Dendritic cell treated with granulocyte-macrophage colony-stimulating factor and Interleukin-4, amounts not matched to agents 40 ng/mL and 50 ng/mL, for 4 days (primary cell): ENCODE measurements at regions of chr5 and their contacts with region 1.

Region 1: GRCh38 chr5:132007399-132008165 is 3.9 kb downstream of the ACSL6 start:
- H3K4me3 Mint-ChIP-seq: no peak overlapping the region
- H3K27ac Mint-ChIP-seq: no peak overlapping the region
- H3K4me1 Mint-ChIP-seq: peaks cover 11% of the 10 kb centered on the region
- H3K27me3 Mint-ChIP-seq: peaks cover 45% of the 10 kb centered on the region

Region 2: GRCh38 chr5:131423056-131423455 is 584.5 kb before region 1 on chr5:
- intact Hi-C with region 1: loop called (anchors 2 kb)
- H3K4me3 Mint-ChIP-seq: no peak overlapping the region
- H3K27ac Mint-ChIP-seq: no peak overlapping the region
- H3K4me1 Mint-ChIP-seq: no peaks in the 10 kb centered on the region
- H3K27me3 Mint-ChIP-seq: no peaks in the 10 kb centered on the region

Region 3: DNA sequence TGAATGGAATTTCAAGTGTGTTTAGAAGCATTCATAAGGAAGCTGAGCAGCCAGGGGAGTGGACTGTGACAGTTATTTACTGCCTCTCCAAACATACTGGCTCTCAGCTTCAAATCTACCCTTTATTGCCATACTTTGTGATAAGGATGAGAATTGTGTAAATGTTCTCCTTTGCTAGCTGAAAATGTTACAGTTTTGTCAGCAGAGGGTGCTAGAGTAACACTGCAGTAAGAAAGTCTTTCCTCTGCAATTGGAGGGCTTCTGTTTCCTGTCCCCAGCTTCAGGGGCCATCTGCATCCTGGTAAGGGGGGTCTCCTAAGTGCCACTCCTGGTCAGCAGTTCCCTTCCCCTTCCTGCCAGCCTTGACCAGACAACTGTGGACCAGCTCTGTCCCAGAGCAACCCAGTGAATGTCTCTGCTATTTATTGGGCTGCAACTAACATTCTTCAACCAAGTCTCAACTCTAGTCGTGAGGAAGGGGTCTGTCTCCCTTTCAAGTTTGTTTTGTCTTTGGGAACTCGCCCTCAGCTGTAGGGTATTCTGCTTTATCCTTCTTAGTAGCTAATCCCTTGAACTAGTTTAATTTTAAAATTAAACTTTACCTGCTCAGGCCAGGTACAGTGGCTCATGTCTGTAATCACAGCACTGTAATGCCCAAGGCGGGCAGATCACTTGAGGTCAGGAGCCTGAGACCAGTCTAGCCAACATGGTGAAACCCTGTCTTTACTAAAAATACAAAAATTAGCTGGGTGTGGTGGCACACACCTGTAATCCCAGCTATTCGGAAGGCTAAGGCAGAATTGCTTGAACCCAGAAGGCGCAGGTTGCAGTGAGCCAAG is 417.9 kb before region 1 on chr5:
- intact Hi-C with region 1: loop called (anchors 1 kb)
- H3K4me3 Mint-ChIP-seq: no peak overlapping the region
- H3K27ac Mint-ChIP-seq: no peak overlapping the region
- H3K4me1 Mint-ChIP-seq: peaks cover 16% of the 10 kb centered on the region
- H3K27me3 Mint-ChIP-seq: no peaks in the 10 kb centered on the region

Region 4: DNA sequence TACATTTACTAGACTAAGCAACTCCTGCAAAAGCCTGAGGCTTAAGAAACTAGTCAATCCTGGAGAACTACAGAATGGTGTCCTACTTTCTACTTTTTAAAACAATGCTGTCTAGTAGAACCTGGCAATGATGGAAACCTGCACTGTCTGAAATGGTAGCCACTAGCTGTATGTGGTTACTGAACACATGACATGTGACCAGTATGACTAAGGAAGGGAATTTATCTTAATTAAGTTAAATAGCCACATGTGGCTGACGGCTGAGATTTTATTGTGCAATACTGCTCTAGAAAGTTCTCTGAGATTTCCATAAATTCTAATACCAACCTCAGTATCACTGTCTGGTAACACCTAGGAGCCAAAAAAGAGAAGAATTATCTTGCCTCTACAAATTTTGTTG is 327.7 kb before region 1 on chr5:
- intact Hi-C with region 1: loop called (anchors 10 kb)
- H3K4me3 Mint-ChIP-seq: no peak overlapping the region
- H3K27ac Mint-ChIP-seq: no peak overlapping the region
- H3K4me1 Mint-ChIP-seq: peaks cover 18% of the 10 kb centered on the region
- H3K27me3 Mint-ChIP-seq: no peaks in the 10 kb centered on the region

Region 5: GRCh38 chr5:131796793-131797693 is 210.5 kb before region 1 on chr5 and contains the start of gene FNIP1:
- intact Hi-C with region 1: loop called (anchors 10 kb)
- H3K4me3 Mint-ChIP-seq: peak within 1 kb of the TSS; percentile 96
- H3K27ac Mint-ChIP-seq: peak within 1 kb of the TSS; percentile 96
- H3K4me1 Mint-ChIP-seq: peaks cover 25% of the 10 kb centered on the region
- H3K27me3 Mint-ChIP-seq: no peaks in the 10 kb centered on the region

Region 6: DNA sequence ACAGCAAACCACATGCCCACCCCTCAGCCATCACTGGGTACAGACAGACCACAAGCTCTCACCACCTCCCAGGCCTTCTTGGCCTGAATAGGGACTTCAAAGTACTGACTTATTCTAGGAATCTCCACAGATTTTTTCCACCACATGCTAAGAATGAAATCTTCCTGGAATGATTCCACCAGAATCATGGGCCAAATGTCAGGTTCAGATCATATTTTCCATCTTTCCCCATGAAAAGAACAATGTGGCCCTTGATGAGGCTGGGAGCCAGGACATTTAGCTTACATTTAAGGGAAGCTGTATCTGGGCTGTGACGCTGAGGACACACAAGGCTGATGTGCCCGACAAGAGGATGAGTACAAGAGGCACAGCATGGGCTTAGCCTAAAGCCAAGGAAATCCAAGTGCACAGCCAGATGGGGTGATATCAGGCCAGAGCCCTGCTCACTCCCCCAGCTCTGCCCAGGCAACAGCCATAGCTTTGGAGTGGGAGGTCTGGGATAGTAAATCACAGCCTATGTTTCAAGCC is 24.3 kb before region 1 on chr5:
- intact Hi-C with region 1: no loop called
- H3K4me3 Mint-ChIP-seq: no peak overlapping the region
- H3K27ac Mint-ChIP-seq: no peak overlapping the region
- H3K4me1 Mint-ChIP-seq: no peaks in the 10 kb centered on the region
- H3K27me3 Mint-ChIP-seq: peaks cover 2% of the 10 kb centered on the region